Testis (tissue), 5 donors: ENCODE measurements at regions of chr1 and their contacts with region 1.

Region 1: GRCh38 chr1:39105061-39105840 is 79.1 kb downstream of the NDUFS5 start:
- DNase-seq: peak; percentile 61
- H3K4me3 ChIP-seq: peak overlapping the region; percentile 75 to 77
- H3K27ac ChIP-seq: peak overlapping the region; percentile 92 to 98
- H3K4me1 ChIP-seq: peaks cover 33% of the 10 kb centered on the region
- H3K27me3 ChIP-seq: no peaks in the 10 kb centered on the region
- CTCF ChIP-seq: no peak
- POLR2A ChIP-seq: no peak

Region 2: DNA sequence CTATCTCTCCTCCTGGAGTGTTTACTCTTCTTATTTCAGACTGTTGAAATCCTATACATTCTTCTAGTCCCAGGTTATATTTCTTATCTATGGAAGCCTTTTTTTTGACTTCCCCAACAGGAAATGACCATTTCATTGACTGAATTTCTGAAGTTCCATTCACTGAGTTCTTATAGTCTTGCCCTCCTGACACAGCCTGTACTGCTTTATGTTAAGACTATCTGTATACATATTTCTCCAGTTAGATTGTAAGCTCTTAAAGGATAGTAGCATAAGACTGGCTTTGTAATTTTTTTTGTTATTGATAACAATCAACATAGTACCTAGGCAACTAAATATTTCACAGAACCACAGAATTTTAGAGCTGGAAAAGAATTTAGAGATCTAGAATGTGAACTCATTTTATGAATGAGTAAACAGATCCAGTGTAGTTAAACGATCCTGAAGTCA is 84.4 kb after region 1 on chr1:
- intact Hi-C with region 1: loop called (anchors 5 kb)
- DNase-seq: no peak
- H3K4me3 ChIP-seq: no peak overlapping the region
- H3K27ac ChIP-seq: no peak overlapping the region
- H3K4me1 ChIP-seq: peaks cover 12% of the 10 kb centered on the region
- H3K27me3 ChIP-seq: no peaks in the 10 kb centered on the region
- CTCF ChIP-seq: no peak
- POLR2A ChIP-seq: no peak